ENCODE measurements at regions of chr16 and their contacts with region 1.

Region 1: GRCh38 chr16:84913315-84913714 is 93.5 kb downstream of the CRISPLD2 start:
- DNase-seq: peak; percentile 96
- H3K4me3 ChIP-seq: no peak overlapping the region
- H3K27ac ChIP-seq: peak overlapping the region; percentile 57 to 72
- H3K4me1 ChIP-seq: peaks cover 9% of the 10 kb centered on the region
- H3K27me3 ChIP-seq: no peaks in the 10 kb centered on the region
- CTCF ChIP-seq: no peak
- POLR2A ChIP-seq: no peak

Region 2: DNA sequence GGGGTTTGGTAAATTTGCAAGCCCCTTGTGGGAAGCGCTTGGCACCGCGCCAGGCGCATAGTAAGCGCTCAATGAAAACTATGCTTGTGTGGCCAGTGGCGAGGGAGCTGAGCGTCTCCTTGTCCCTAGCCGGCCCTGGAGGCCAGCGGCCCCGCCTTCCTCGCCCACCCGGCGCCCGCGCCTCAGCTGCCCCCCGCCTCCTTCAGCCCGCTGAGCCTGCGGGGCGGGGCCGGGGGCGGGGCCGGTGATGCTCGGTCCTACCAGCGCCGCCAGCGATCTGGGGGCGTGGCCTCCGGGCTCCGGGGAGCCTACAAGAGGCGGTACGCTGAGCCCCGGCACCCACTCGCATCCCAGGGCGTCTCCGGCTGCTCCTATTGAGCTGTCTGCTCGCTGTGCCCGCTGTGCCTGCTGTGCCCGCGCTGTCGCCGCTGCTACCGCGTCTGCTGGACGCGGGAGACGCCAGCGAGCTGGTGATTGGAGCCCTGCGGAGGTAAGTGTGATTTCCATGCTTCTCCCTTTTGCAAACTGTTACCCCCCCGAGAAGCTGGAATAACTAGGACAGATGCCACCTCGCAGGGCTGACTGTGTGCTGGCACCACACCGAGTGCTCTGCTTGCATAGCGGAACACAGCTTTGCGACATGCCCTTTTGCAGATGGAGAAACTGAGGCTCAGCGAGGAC is 93.5 kb before region 1 on chr16 and contains the start of gene CRISPLD2:
- intact Hi-C with region 1: loop called (anchors 5 kb)
- DNase-seq: peak; percentile 93
- H3K4me3 ChIP-seq: peak within 1 kb of the TSS; percentile 48 to 49
- H3K27ac ChIP-seq: peak within 1 kb of the TSS; percentile 85
- H3K4me1 ChIP-seq: peaks cover 3% of the 10 kb centered on the region
- H3K27me3 ChIP-seq: no peaks in the 10 kb centered on the region
- CTCF ChIP-seq: no peak
- POLR2A ChIP-seq: peak; percentile 91
- total RNA-seq, gene CRISPLD2: 186 to 226 TPM

Region 3: DNA sequence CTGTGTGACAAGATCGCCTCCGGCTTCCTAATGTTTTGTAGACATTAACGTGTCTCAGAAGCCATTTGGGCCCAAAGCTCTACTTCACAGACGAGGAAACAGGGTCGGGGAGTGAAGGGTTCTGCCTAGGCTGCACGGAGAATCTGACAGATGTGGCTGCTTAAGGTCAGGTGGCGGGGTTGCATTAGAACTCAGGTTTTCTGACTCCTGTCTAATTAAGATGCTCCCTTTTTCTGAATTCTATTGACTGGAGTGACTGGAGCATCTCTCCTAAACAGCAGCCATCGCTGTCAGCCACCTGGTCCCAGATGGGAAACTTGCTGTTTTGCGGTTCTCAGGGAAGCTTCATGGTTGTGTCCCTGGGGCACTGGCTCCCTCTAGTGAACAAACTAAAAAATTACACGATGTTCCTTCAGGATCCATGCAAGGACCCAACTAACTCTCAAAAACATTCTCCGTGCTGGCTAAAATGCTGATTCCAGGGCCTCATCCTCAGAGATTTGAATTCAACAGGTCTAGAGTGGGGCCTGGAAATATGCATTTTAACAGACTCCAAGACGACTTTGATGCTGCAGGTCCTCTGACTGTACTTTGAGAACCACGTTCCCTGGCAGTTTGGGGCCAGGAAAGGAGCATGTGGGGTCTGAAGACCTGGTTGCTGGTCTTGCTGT is 1103.0 kb after region 1 on chr16:
- intact Hi-C with region 1: no loop called
- DNase-seq: peak; percentile 20
- H3K4me3 ChIP-seq: no peak overlapping the region
- H3K27ac ChIP-seq: no peak overlapping the region
- H3K4me1 ChIP-seq: no peaks in the 10 kb centered on the region
- H3K27me3 ChIP-seq: no peaks in the 10 kb centered on the region
- CTCF ChIP-seq: peak; percentile 17 to 73 (median 71)
- POLR2A ChIP-seq: no peak